ENCODE measurements at regions of chr4 and their contacts with region 1.

Region 1: DNA sequence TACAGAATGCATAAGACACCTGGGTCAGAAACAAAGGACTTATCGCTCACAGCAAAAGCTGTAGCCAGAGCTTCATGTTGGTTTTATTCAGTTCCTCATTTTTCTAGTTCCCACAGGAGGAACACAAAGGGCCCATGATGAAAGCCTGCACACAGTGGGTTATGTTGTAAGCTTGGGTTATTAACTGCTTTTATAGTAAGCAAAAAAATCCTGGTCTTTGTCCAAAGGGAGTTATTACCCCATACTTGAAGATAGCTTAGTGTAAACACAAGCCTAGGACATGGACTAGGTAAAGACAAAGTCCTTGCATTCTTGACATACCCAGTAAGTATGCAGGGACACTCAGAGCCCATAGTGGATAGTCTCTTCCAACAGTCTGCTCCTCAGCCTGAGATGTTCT is 11.7 kb downstream of the BBS12 start:
- DNase-seq: no peak
- H3K4me3 ChIP-seq: no peak overlapping the region
- H3K27ac ChIP-seq: no peak overlapping the region
- H3K4me1 ChIP-seq: peaks cover 14% of the 10 kb centered on the region
- H3K27me3 ChIP-seq: no peaks in the 10 kb centered on the region
- CTCF ChIP-seq: no peak

Region 2: GRCh38 chr4:121764707-121765593 is 979.3 kb before region 1 on chr4 and contains the start of gene SMIM43:
- CTCF ChIA-PET with region 1: no interaction called
- dilution Hi-C with region 1: no loop called
- in situ Hi-C with region 1: no loop called
- intact Hi-C with region 1: no loop called
- DNase-seq: peak; percentile 18
- H3K4me3 ChIP-seq: peak within 1 kb of the TSS; percentile 28 to 53 (median 50)
- H3K27ac ChIP-seq: no peak within 1 kb of the TSS
- H3K4me1 ChIP-seq: no peaks in the 10 kb centered on the region
- H3K27me3 ChIP-seq: peaks cover 2% of the 10 kb centered on the region
- CTCF ChIP-seq: no peak
- total RNA-seq, gene SMIM43: not detected

Region 3: GRCh38 chr4:122776916-122777315 is 32.7 kb after region 1 on chr4:
- CTCF ChIA-PET with region 1: no interaction called
- dilution Hi-C with region 1: no loop called
- in situ Hi-C with region 1: no loop called
- intact Hi-C with region 1: loop called (anchors 1 kb)
- DNase-seq: peak; percentile 38
- H3K4me3 ChIP-seq: no peak overlapping the region
- H3K27ac ChIP-seq: no peak overlapping the region
- H3K4me1 ChIP-seq: peaks cover 35% of the 10 kb centered on the region
- H3K27me3 ChIP-seq: no peaks in the 10 kb centered on the region
- CTCF ChIP-seq: no peak